PC-3 (cell line): ENCODE measurements at regions of chr3 and their contacts with region 1.

Region 1: GRCh38 chr3:32177702-32178198 is 60.7 kb upstream of the CMTM8 start:
- DNase-seq: peak; percentile 97
- ATAC-seq: peak; percentile 91
- H3K4me3 ChIP-seq: peak overlapping the region; percentile 53
- H3K27ac ChIP-seq: no peak overlapping the region
- H3K4me1 ChIP-seq: peaks cover 9% of the 10 kb centered on the region; the same call in 1 of the 2 replicates
- H3K27me3 ChIP-seq: no peaks in the 10 kb centered on the region
- CTCF ChIP-seq: peak; percentile 93

Region 2: DNA sequence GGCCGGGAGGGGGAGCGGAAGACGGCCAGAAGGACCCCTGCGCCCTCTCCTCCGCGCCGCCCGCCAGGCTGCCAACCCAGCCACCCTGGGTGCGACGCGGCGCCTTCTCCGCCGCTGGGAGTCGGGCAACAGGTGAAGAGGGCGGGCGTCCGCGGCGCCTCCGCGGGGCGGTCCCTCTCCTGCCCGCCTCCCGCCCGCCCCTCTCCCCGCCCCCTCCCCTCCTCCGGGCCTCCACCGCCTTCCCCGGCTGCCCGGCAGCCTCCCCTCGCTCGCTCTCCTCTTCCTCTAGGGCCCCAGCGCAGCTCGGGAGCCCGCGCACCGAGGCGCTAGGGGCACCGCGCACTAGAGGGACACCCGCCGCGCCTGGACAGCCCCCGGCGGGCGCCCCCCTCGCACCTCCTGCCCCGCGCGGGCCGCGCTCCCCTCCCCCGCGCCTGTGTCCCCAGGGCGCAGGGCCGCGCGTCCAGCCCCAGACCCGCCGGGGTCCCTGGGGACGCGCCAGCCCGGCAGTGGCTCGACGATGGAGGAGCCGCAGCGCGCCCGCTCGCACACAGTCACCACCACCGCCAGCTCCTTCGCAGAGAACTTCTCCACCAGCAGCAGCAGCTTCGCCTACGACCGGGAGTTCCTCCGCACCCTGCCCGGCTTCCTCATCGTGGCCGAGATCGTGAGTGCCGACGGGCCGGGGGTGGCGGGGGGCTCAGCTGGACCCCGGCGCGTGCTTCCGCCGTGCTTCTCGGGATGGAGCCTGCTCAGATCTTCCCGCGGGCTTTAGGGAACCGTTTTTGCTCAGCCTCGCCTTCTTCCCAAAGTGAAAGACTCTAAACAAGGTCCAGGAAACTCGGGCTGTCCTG is 60.9 kb after region 1 on chr3 and contains the start of gene CMTM8:
- CTCF ChIA-PET with region 1: no interaction called
- POLR2A ChIA-PET with region 1: no interaction called
- intact Hi-C with region 1: loop called (anchors 1 kb)
- DNase-seq: peak; percentile 78
- ATAC-seq: peak; percentile 84
- H3K4me3 ChIP-seq: peak within 1 kb of the TSS; percentile 92
- H3K27ac ChIP-seq: no peak within 1 kb of the TSS
- H3K4me1 ChIP-seq: peaks cover 17% of the 10 kb centered on the region
- H3K27me3 ChIP-seq: no peaks in the 10 kb centered on the region
- CTCF ChIP-seq: no peak
- total RNA-seq, gene CMTM8: 1.4 and 5.2 TPM in 2 replicates

Region 3: GRCh38 chr3:32249184-32249782 is 71.5 kb after region 1 on chr3:
- CTCF ChIA-PET with region 1: interaction called, 3 read pairs
- POLR2A ChIA-PET with region 1: interaction called, 3 read pairs
- intact Hi-C with region 1: loop called (anchors 2 kb)
- DNase-seq: peak; percentile 93
- ATAC-seq: peak; percentile 76
- H3K4me3 ChIP-seq: no peak overlapping the region
- H3K27ac ChIP-seq: peak overlapping the region; percentile 84
- H3K4me1 ChIP-seq: peaks cover 34% of the 10 kb centered on the region
- H3K27me3 ChIP-seq: no peaks in the 10 kb centered on the region
- CTCF ChIP-seq: no peak

Region 4: GRCh38 chr3:32296256-32297204 is 118.8 kb after region 1 on chr3:
- CTCF ChIA-PET with region 1: no interaction called
- POLR2A ChIA-PET with region 1: no interaction called
- intact Hi-C with region 1: loop called (anchors 1 kb)
- DNase-seq: peak; percentile 73
- ATAC-seq: peak; percentile 94
- H3K4me3 ChIP-seq: no peak overlapping the region
- H3K27ac ChIP-seq: no peak overlapping the region
- H3K4me1 ChIP-seq: 0 out of 2 replicates have a peak, but pooled peaks cover 2% of the 10 kb centered on the region
- H3K27me3 ChIP-seq: no peaks in the 10 kb centered on the region
- CTCF ChIP-seq: peak; percentile 93

Region 5: GRCh38 chr3:32334675-32335074 is 156.9 kb after region 1 on chr3:
- CTCF ChIA-PET with region 1: interaction called, 3 read pairs
- POLR2A ChIA-PET with region 1: no interaction called
- intact Hi-C with region 1: loop called (anchors 1 kb)
- DNase-seq: peak; percentile 34
- ATAC-seq: peak; percentile 60; the same call in 1 of the 2 replicates
- H3K4me3 ChIP-seq: no peak overlapping the region
- H3K27ac ChIP-seq: no peak overlapping the region
- H3K4me1 ChIP-seq: no peaks in the 10 kb centered on the region
- H3K27me3 ChIP-seq: no peaks in the 10 kb centered on the region
- CTCF ChIP-seq: peak; percentile 63

Region 6: GRCh38 chr3:32340039-32340438 is 162.3 kb after region 1 on chr3:
- CTCF ChIA-PET with region 1: interaction called, 3 read pairs
- POLR2A ChIA-PET with region 1: no interaction called
- intact Hi-C with region 1: loop called (anchors 1 kb)
- DNase-seq: peak; percentile 74
- ATAC-seq: peak; percentile 94
- H3K4me3 ChIP-seq: no peak overlapping the region
- H3K27ac ChIP-seq: no peak overlapping the region
- H3K4me1 ChIP-seq: no peaks in the 10 kb centered on the region
- H3K27me3 ChIP-seq: no peaks in the 10 kb centered on the region
- CTCF ChIP-seq: peak; percentile 83

Region 7: GRCh38 chr3:32401556-32402081 is 223.9 kb after region 1 on chr3:
- CTCF ChIA-PET with region 1: no interaction called
- POLR2A ChIA-PET with region 1: no interaction called
- intact Hi-C with region 1: loop called (anchors 1 kb)
- DNase-seq: peak; percentile 87
- ATAC-seq: peak; percentile 82
- H3K4me3 ChIP-seq: peak overlapping the region; percentile 61
- H3K27ac ChIP-seq: peak overlapping the region; percentile 90
- H3K4me1 ChIP-seq: peaks cover 23% of the 10 kb centered on the region
- H3K27me3 ChIP-seq: no peaks in the 10 kb centered on the region
- CTCF ChIP-seq: 0 out of 2 replicates have a peak, but pooled peaks have one; percentile 8